Vagina (tissue), 2 donors: ENCODE measurements at regions of chr20 and their contacts with region 1.

Region 1: DNA sequence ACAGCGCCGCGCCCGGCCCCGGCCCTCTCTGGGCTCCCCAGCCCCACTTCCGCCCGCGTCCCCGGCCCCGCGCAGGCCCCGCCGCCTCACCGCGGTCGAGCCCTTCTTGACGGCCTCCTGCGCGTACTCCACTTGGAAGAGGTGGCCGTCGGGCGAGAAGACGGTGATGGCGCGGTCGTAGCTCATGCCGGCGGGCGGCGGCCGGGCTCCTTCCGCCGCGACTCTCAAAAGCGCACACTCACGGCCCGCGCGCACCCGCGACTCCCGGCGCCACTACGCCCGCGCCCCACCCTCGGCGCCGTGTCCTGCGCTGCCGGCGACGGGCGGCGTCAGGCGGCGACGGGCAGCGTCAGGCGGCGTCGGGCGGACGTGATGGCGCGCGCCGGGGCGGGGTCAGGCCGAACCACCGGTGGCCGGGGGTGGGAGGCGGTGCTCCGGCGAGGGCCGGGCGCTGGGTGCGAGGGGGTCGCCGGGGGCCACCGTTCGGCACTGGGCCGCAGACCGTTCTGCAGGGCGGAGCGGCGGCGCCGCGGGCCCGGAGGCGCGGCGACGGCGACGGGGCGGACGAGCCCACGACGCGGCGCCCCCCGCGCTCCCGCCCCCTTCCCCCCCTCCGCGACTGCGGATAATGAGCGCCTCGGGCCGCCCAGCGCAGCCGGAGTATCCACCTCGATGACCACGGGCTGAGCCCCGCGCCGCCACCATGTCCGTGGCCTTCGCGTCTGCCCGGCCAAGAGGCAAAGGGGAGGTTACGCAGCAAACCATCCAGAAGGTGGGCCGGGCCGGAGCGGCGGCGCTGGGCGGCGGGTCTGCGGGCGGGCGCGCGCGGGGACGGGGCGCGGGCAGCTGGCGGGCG is at the starts of genes PSMA7 and SS18L1:
- DNase-seq: no peak
- H3K4me3 ChIP-seq: peak within 1 kb of the TSS; percentile 83 to 98
- H3K27ac ChIP-seq: peak within 1 kb of the TSS; percentile 89
- H3K4me1 ChIP-seq: peaks cover 59% of the 10 kb centered on the region
- H3K27me3 ChIP-seq: no peaks in the 10 kb centered on the region
- CTCF ChIP-seq: no peak
- POLR2A ChIP-seq: peak in 1 of 2 donors; percentile 92
- total RNA-seq, gene PSMA7: 319 TPM
- total RNA-seq, gene SS18L1: 25.3 TPM

Region 2: DNA sequence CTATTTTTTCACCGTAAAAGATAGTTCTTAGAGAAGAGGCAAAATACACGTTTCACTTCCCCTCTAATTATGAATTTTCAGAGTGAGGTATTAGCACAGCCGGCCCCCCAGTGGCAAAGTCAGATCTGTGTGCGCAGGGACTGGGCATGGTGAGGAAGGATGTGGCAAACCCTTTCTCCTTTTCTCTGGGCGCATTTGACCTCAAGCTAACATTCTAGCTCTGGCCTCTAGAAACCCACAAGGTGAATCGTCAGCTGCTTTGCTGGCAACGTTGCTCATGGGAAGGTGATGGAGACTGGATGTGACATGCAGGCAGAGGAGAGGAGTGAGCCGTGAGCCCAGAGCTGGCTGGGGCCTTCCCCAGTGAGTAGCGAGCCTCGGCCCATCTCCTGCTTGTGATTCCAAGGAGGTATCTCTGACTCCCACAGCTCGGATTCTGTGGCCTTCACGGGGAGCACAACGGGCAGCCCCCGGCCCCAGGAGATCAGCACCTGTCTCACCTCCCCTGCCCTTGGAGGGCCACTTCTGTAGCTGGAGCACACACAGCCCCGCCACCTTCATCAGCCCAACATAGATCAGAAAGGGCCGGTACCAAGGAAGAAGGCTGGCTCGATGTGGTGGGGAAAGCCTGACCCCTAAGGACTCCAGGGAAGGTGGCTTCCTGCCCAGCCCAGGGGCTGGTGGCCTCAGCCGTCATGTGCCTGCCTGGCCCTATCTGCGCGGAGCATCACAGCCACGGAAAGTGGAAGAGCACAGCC is 230.5 kb before region 1 on chr20:
- intact Hi-C with region 1: no loop called
- DNase-seq: no peak
- H3K4me3 ChIP-seq: no peak overlapping the region
- H3K27ac ChIP-seq: no peak overlapping the region
- H3K4me1 ChIP-seq: no peaks in the 10 kb centered on the region
- H3K27me3 ChIP-seq: no peaks in the 10 kb centered on the region
- CTCF ChIP-seq: no peak
- POLR2A ChIP-seq: no peak

Region 3: DNA sequence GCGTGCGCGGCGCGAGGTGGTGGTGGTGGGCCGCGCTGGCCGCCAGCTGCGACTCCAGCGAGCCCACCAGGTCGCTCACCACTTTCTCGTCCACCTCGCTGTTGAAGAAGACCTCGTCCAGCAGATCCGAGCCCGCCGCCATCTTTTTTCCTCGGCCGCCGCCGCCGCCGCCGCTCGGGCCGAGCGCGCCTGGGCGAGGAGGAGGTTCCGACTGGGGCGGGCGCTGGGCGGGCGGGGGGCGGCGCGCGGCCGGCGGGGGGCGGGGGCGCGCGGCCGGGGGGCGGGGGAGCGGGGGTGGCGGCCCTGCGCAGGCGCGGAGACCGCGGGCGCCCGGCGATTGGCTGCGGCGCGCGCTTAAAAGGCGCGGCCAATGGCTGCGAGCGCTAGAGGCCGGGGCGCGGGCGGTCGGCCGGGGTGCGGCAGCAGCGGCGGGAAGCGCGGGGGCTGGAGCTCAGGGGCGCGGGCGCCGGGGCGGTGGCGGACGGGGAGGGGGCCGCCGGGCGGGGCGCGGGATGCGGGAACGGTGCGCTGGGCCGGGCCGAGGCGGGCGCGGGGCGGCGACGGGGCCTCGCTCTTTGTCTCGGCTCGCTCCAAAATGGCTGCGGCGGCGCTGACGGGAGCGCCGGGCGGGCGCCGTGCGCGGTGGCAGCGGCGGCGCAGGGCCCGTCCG is 77.5 kb before region 1 on chr20 and contains the start of gene TAF4:
- intact Hi-C with region 1: loop called (anchors 5 kb)
- DNase-seq: no peak
- H3K4me3 ChIP-seq: peak within 1 kb of the TSS; percentile 65 to 83
- H3K27ac ChIP-seq: peak within 1 kb of the TSS; percentile 79
- H3K4me1 ChIP-seq: peaks cover 60% of the 10 kb centered on the region
- H3K27me3 ChIP-seq: no peaks in the 10 kb centered on the region
- CTCF ChIP-seq: no peak
- POLR2A ChIP-seq: peak in 1 of 2 donors; percentile 81
- total RNA-seq, gene TAF4: 9.6 TPM

Region 4: DNA sequence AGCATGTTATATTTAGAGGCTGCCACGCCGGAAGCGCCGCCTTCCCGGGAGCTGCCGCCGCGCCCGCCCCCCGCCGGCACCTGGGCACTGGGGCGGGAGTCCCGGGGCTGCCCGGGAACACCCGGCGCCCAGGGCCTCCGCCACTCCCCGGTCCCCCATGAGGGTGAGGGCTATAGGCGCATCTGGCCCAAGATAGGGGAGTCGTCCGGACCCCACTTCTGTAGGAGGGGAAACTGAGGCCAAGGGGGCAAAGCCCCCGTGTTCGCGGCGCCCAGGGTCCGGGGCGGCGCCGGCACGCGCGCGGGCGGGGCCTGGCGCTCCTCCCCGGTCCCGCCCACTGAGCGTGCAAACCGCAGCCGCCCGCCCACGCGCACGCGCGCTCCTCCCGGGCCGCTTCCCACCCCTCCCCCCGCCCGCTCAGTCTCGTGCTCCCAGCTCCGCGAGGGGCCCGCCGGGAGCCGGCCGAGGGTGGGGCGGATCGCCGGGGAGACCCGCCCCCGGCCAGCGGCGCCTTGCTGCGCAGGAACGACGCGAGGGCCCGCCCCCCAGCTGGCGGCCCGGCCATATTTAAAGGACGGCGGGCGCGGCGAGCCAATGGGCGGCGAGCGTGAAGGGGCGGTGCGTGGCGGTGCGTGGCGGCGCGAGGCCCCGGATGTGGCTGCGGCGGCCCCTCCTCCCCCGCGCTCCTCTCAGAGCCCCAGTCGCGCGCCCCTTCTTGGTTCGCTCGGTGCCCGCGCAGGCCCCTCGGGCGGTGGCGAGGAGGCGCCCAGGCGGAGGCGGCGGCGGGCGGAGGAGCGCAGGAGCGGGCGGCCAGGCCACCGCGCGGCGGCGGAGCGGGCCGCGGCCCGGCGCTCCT is 21.3 kb before region 1 on chr20 and contains the start of gene LSM14B:
- intact Hi-C with region 1: loop called (anchors 2 kb)
- DNase-seq: peak in 1 of 2 donors; percentile 96
- H3K4me3 ChIP-seq: peak within 1 kb of the TSS; percentile 69 to 97
- H3K27ac ChIP-seq: peak within 1 kb of the TSS; percentile 89
- H3K4me1 ChIP-seq: peaks cover 30% of the 10 kb centered on the region
- H3K27me3 ChIP-seq: no peaks in the 10 kb centered on the region
- CTCF ChIP-seq: no peak
- POLR2A ChIP-seq: peak in 1 of 2 donors; percentile 65
- total RNA-seq, gene LSM14B: 23.6 TPM

Region 5: DNA sequence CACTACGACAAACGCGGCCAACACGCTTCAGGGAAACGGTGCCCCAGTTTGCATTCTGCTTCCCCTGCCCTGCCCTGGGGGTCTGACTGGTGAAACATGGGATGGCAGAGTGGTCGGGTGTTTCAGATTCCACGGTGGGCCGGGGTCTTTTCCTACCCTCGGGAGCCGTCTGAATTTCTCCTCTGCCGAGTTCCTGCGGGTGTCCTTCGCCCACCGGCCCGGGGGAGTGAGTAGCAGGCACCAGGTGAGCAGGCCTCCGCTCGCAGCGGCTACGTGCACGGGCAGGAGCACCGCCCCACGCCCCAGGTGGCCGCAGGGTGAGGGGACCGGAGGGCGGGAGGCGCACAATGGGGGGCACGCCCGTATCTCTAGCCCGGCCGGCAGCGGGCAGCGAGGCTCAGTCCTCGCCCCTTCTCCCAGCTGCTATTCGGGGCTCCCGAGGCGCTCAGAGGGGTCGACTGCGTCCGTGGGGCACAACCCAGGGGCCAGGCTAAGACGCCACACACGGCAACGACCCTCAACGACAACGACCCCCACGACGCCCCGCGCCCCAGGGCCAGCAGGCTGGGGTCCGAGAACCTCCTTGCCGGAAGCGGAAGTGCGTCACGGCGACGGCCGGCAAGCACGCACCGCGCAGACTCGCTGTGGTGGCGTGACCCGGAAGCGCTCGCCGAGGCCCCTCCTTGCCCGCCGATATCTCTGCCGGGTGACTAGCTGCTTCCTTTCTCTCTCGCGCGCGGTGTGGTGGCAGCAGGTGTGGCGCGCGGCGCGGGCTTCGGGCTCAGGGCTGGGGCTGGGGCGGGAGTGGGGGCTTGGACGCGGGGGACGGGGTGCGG is 243.3 kb after region 1 on chr20 and contains the start of gene RPS21:
- intact Hi-C with region 1: loop called (anchors 10 kb)
- DNase-seq: no peak
- H3K4me3 ChIP-seq: peak within 1 kb of the TSS; percentile 87 to 100
- H3K27ac ChIP-seq: peak within 1 kb of the TSS; percentile 92
- H3K4me1 ChIP-seq: peaks cover 40% of the 10 kb centered on the region
- H3K27me3 ChIP-seq: no peaks in the 10 kb centered on the region
- CTCF ChIP-seq: peak in 1 of 3 experiments; percentile 12
- POLR2A ChIP-seq: peak in 1 of 2 donors; percentile 52
- total RNA-seq, gene RPS21: 1,935 TPM

Region 6: DNA sequence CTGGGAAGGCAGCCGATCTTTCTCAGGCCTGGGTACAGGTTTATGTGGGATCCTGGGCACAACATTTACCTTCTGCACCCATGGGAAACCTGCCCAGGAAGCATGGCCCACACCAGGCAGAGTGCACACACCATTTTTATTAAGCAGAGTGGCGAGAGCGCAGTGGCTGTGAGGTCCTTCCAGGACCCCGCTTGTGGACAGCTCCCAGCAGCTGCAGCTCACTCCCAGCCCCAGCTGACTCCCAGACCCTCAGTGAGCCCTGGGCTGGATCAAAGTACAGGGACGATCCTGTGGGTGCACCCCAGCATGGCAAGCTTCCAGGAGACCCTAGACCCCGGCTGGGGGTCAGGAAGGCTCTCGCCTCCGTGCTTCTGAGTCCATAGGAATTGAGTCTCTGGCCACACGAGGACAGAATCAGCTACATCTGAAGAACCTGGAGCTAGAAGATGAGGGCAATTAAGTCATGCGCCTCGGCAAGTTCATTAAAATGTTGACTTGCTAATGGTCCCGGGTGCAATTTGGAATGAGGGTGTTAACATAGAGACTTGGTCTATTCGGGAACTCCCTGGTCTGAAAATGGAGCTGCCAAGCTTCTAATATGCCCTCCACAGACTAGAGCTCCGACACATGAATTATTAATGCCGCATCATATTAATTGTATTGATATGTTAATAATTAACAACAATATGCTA is 433.6 kb after region 1 on chr20:
- intact Hi-C with region 1: no loop called
- DNase-seq: no peak
- H3K4me3 ChIP-seq: no peak overlapping the region
- H3K27ac ChIP-seq: no peak overlapping the region
- H3K4me1 ChIP-seq: peaks cover 6% of the 10 kb centered on the region
- H3K27me3 ChIP-seq: peaks cover 5% of the 10 kb centered on the region
- CTCF ChIP-seq: no peak
- POLR2A ChIP-seq: no peak